Activated CD4-positive, alpha-beta T cell treated with anti-CD3 and anti-CD28 coated beads for 36 hours (primary cell): ENCODE measurements at regions of chrX and their contacts with region 1.

Region 1: DNA sequence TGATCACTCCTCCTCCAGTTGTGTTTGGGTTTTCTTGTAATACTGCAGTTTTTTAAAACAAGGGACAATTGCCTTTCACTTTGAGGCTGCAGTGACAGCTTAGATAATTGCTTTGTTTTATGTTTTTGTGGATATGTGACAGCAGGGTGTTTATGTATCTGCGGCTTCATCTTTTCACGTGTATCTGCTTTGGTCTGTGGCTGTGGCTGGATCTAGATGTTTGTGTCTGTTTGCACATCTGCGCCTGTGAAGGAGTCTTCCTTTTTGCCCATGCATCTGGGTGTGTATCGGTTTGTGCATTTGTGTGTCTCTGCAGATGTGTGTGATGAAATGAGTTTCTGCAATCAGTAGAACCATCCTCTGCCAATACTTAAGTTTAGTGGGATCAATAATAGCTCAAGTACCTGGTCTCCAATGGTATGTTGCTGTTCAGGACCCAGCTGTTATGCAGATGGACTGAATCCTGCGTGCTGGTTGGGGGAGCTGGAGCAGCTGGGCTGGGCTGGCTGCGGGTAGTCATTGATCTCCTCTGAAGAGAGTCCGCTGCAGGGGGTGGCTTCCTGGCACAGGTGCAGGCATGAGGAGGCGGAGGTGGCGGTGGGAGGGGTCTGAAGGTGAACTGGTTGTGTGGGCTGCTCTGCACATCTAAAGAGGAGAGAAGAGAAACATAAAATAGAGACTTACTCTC is 390.3 kb downstream of the SH2D1A start:
- DNase-seq: peak; percentile 72
- ATAC-seq: peak; percentile 89
- H3K4me3 Mint-ChIP-seq: peak overlapping the region; percentile 59
- H3K27ac Mint-ChIP-seq: peak overlapping the region; percentile 62
- H3K4me1 Mint-ChIP-seq: peaks cover 40% of the 10 kb centered on the region
- H3K27me3 Mint-ChIP-seq: no peaks in the 10 kb centered on the region

Region 2: DNA sequence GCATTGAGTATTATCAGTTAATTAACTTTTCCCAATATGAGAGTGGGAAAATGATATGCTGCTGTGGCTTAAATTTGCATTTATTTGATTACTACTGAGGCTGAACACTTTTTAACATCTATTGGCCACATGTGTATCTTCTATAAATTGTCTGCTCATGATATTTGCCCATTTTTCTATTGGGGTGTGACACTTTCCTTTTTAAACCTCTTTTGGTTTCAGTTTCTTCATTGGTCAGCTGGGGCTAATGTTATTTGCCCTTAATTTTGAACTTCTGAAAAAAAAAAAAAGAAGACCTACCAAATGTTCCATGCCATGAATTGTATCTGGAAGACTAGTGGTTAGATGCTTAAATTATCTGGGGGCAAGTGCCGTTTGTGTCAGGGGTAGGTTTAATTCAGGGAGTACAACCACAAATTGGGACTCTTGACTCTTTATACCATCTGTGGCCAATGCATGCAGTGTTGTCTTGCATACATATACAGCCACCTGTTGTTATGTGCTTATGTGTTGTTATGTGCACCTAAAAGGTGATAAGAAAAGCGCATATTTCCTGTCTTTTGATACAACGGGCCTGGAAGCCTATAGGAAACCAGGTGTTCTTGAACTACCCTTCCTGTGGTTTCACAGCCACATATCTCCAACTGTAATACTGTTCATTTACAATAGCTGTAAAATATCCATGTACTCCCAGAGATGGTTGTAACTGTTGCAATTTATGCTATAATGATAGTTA is 341.4 kb before region 1 on chrX:
- CTCF ChIA-PET with region 1: no interaction called
- POLR2A ChIA-PET with region 1: interaction called, 3 read pairs
- intact Hi-C with region 1: loop called (anchors 10 kb)
- DNase-seq: no peak
- ATAC-seq: no peak
- H3K4me3 Mint-ChIP-seq: no peak overlapping the region
- H3K27ac Mint-ChIP-seq: peak overlapping the region; percentile 47
- H3K4me1 Mint-ChIP-seq: peaks cover 29% of the 10 kb centered on the region
- H3K27me3 Mint-ChIP-seq: no peaks in the 10 kb centered on the region

Region 3: DNA sequence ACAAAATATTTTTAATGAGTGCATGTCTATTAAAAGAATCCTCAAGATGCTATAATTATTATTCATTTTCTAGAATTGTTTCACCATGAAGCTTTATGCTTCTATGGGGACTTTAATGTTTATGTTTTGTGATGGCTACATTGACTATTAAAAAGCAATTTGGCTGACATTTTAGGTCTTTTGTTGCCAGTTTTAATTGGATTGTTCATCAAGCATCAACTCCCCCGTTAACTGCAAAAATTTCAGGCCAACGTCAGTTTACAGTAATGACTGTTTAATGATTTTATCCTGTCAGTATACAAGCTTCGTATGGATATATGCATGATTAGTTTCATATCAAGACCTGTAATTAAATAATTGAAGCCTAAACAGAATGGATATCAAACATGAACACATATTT is 32.5 kb after region 1 on chrX:
- CTCF ChIA-PET with region 1: no interaction called
- POLR2A ChIA-PET with region 1: no interaction called
- intact Hi-C with region 1: no loop called
- DNase-seq: no peak
- ATAC-seq: no peak
- H3K4me3 Mint-ChIP-seq: no peak overlapping the region
- H3K27ac Mint-ChIP-seq: no peak overlapping the region
- H3K4me1 Mint-ChIP-seq: no peaks in the 10 kb centered on the region
- H3K27me3 Mint-ChIP-seq: no peaks in the 10 kb centered on the region

Region 4: DNA sequence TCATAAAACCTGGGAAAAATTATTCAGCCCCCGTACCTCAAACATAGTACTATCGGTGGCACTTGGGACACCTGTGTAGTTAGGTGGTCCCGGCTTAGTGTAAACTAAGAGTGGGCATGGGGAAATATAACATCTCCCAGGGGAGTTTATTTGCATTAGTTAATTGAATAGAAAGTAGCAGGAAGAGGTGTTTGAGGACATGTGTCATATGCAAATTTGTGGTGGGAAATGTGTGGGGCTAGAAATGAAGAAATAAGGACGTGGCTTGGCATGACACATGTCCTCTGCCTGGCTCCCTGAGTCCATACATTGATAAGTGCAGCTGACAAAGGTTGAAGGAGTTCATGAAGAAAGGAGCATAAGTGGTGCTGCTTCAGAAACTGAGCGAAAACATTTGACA is 93.2 kb after region 1 on chrX:
- CTCF ChIA-PET with region 1: no interaction called
- POLR2A ChIA-PET with region 1: no interaction called
- intact Hi-C with region 1: loop called in 1 of 2 experiments (anchors 5 kb)
- DNase-seq: peak; percentile 16
- ATAC-seq: peak; percentile 90
- H3K4me3 Mint-ChIP-seq: no peak overlapping the region
- H3K27ac Mint-ChIP-seq: no peak overlapping the region
- H3K4me1 Mint-ChIP-seq: peaks cover 26% of the 10 kb centered on the region
- H3K27me3 Mint-ChIP-seq: no peaks in the 10 kb centered on the region

Region 5: GRCh38 chrX:124887572-124887971 is 150.9 kb after region 1 on chrX:
- CTCF ChIA-PET with region 1: no interaction called
- POLR2A ChIA-PET with region 1: no interaction called
- intact Hi-C with region 1: no loop called
- DNase-seq: no peak
- ATAC-seq: no peak
- H3K4me3 Mint-ChIP-seq: no peak overlapping the region
- H3K27ac Mint-ChIP-seq: no peak overlapping the region
- H3K4me1 Mint-ChIP-seq: no peaks in the 10 kb centered on the region
- H3K27me3 Mint-ChIP-seq: no peaks in the 10 kb centered on the region